ENCODE measurements at regions of chr3 and their contacts with region 1.

Region 1: GRCh38 chr3:57961828-57962447 is 46.3 kb upstream of the FLNB start:
- DNase-seq: peak in 1 of 2 experiments; percentile 41
- H3K4me3 ChIP-seq: no peak overlapping the region
- H3K27ac ChIP-seq: 0 out of 2 replicates have a peak overlapping the region, but pooled peaks have one; percentile 7
- H3K4me1 ChIP-seq: peaks cover 34% of the 10 kb centered on the region
- H3K27me3 ChIP-seq: no peaks in the 10 kb centered on the region
- CTCF ChIP-seq: peak; percentile 67

Region 2: GRCh38 chr3:57974796-57975388 is 13.0 kb after region 1 on chr3:
- CTCF ChIA-PET with region 1: interaction called, 3 read pairs
- POLR2A ChIA-PET with region 1: interaction called, 24 read pairs
- intact Hi-C with region 1: loop called (anchors 1 kb)
- DNase-seq: peak; percentile 63 to 91
- H3K4me3 ChIP-seq: no peak overlapping the region
- H3K27ac ChIP-seq: peak overlapping the region; percentile 100
- H3K4me1 ChIP-seq: peaks cover 98% of the 10 kb centered on the region
- H3K27me3 ChIP-seq: no peaks in the 10 kb centered on the region
- CTCF ChIP-seq: no peak

Region 3: DNA sequence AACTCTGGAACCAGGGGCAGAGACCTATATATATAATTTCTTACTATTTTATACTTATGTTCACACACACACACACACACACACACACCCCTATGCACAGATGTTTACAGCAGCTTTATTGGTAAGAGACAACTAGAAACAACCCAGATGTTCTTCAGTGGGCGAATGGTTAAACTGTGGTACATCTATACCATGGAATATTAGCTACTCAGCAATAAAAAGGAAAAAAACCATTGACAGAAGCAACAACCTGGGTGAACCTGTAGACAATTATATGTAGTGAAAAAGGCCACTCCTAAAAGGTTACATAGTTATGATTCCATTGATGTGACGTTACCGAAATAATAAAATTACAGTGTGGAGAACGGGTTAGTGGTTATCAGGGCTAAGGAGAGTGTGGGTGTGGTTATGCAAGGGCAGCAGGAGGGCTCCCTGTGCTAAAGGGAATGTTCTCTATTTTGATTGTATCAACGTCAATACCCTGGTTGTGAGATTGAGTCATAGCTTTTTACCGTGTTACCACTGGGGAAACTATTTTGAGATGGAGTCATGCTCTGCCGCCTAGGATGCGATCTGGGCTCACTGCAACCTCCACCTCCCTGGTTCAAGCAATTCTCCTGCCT is 131.7 kb after region 1 on chr3:
- CTCF ChIA-PET with region 1: no interaction called
- POLR2A ChIA-PET with region 1: no interaction called
- intact Hi-C with region 1: loop called (anchors 5 kb)
- DNase-seq: peak; percentile 67 to 94
- H3K4me3 ChIP-seq: no peak overlapping the region
- H3K27ac ChIP-seq: peak overlapping the region; percentile 62
- H3K4me1 ChIP-seq: peaks cover 7% of the 10 kb centered on the region; the same call in 1 of the 2 replicates
- H3K27me3 ChIP-seq: no peaks in the 10 kb centered on the region
- CTCF ChIP-seq: no peak

Region 4: DNA sequence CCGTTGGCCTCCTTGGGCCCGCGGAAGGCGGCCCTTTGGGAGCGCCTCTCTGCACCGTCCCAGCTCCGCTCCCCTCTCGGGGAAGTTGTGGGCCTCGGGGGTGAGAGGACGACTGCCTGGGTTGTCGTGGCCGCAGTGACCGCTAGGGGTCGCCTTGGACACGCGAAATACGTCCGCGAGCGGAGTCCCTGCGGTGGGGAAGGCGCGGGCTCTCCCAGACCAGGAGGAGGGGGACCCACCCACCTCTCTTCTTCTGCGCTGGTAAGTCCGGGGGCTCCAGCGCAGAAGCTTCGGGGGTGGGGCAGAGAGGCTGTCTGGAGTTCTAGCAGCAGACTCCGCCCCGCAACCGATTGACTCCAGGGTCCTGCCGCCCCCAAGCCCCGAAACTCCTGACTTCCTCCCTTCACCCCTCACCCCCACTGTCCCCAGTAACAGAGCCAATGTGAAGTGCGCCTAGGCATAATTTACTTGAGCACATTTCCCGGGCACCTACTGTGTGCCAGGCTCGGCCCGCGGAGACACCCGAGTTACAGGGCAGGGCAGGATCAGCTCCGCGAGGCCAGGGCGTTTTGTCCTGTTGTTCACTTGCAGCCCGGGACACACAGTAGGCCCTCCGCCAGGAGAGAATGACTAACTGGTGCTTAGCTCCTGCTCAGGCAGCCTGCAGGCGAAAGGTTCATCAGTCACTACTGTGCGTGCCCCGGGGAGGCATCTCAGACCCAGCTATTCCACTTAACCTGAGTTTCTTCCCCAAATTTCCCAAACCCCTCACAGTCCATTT is 216.0 kb after region 1 on chr3:
- CTCF ChIA-PET with region 1: no interaction called
- POLR2A ChIA-PET with region 1: no interaction called
- intact Hi-C with region 1: loop called (anchors 5 kb)
- DNase-seq: peak in 1 of 2 experiments; percentile 80
- H3K4me3 ChIP-seq: peak overlapping the region; percentile 46; the same call in 1 of the 2 replicates
- H3K27ac ChIP-seq: no peak overlapping the region
- H3K4me1 ChIP-seq: peaks cover 13% of the 10 kb centered on the region
- H3K27me3 ChIP-seq: no peaks in the 10 kb centered on the region
- CTCF ChIP-seq: peak; percentile 90

Measured in PC-9 (cell line).